Posterior vena cava (tissue), 2 donors: ENCODE measurements at regions of chr2 and their contacts with region 1.

Region 1: DNA sequence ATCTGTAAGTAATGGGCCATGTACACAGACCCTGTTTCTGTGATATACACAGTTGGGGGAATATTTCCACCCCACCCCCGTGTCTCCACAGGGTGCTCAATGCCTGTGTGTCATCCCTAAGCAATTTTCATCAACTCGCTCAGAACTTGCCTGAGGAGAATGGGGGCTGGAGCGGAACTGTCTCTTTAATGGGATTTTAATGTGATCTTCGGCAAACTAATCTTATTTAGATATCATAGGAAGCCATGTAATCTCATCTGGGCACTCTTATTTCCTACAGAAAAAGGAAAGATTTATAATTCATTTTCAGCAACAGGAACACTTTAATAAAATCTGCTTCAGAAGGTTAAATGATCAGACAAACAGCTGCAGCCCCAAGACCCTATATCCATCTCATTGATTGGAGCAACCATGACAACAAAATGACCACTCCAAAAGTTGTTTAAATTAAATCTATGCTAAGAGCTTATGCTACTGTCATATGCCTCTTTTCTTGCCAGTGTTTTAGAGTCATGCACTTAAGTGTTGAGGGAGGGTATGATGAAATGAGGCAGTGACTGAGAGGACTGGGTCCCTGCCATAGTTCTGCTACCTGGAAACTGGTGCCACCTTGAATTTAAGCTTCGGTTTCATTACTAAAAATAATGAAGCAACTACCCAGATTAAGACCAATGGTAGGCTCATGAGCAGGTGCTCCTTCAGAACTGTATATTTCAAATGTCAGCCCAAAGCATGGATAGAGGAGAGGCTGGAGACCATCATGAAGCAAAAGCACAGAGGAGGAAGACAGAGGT is 183.1 kb upstream of the DDX18 start:
- DNase-seq: no peak

Region 2: GRCh38 chr2:117661619-117662018 is 30.3 kb after region 1 on chr2:
- intact Hi-C with region 1: loop called in 1 of 2 experiments (anchors 2 kb)
- DNase-seq: no peak

Region 3: GRCh38 chr2:117674172-117674571 is 42.8 kb after region 1 on chr2:
- intact Hi-C with region 1: no loop called
- DNase-seq: no peak